ENCODE measurements at regions of chr4 and their contacts with region 1.

Region 1: GRCh38 chr4:73653695-73654106 is 33.5 kb upstream of the RASSF6 start:
- DNase-seq: no peak
- ATAC-seq: peak; percentile 73
- H3K4me3 ChIP-seq: no peak overlapping the region
- H3K27ac ChIP-seq: no peak overlapping the region
- H3K4me1 ChIP-seq: peaks cover 0 to 7% of the 10 kb centered on the region in 2 donors
- H3K27me3 ChIP-seq: no peaks in the 10 kb centered on the region

Region 2: GRCh38 chr4:73311428-73311827 is 342.3 kb before region 1 on chr4:
- intact Hi-C with region 1: loop called in 1 of 2 experiments (anchors 10 kb)
- DNase-seq: no peak
- ATAC-seq: no peak
- H3K4me3 ChIP-seq: no peak overlapping the region
- H3K27ac ChIP-seq: no peak overlapping the region
- H3K4me1 ChIP-seq: no peaks in the 10 kb centered on the region
- H3K27me3 ChIP-seq: no peaks in the 10 kb centered on the region

Region 3: DNA sequence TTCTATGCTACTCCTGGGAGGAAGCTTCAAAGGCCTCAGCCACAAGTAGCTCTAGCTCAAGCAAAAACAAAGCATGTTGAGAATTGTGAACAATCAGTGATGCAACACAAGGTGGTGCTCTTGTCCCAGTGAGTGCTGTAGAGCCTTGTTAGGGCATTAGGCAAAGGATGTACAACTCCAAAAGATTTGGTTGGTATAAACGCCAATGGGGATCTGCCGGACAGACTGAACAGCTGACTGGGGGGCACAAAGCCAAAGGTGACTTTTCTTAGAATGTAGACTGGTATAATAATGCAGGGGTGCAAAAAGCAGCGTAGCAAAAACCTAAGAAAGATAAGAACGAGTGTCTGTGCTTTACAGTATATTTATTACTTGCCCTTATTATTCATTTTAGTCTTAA is 312.2 kb before region 1 on chr4:
- intact Hi-C with region 1: loop called (anchors 5 to 10 kb)
- DNase-seq: no peak
- ATAC-seq: peak; percentile 44
- H3K4me3 ChIP-seq: no peak overlapping the region
- H3K27ac ChIP-seq: no peak overlapping the region
- H3K4me1 ChIP-seq: no peaks in the 10 kb centered on the region
- H3K27me3 ChIP-seq: no peaks in the 10 kb centered on the region

Region 4: DNA sequence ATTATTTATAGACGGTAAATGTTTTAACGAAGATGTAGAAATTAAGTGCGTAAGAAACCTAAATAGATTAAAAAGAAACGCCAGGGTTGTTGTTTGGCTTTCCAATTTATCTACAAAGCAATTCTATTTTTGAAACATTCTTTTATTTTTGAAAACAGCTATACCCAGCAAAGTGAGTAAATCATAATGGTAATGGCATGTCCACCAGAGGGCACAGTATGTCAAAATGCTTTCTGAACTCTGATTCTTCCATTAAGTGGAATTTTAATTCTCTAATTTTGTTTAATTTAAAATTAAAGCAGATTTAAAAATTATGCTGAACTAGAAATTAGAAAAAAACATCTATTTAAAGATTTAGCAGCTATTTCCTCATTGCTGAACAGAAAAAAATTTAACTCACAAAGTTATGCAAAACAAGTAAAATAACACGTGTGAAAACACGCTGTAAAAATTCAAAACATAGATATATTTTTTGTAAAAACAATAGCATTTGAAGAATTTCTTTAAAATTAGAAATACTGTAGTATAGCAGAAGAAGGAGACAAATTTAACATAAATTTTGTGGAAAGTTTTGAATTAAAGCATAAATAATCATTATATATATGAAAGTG is 60.0 kb before region 1 on chr4:
- intact Hi-C with region 1: loop called in 1 of 2 experiments (anchors 10 kb)
- DNase-seq: no peak
- ATAC-seq: no peak
- H3K4me3 ChIP-seq: no peak overlapping the region
- H3K27ac ChIP-seq: no peak overlapping the region
- H3K4me1 ChIP-seq: no peaks in the 10 kb centered on the region
- H3K27me3 ChIP-seq: no peaks in the 10 kb centered on the region

Region 5: DNA sequence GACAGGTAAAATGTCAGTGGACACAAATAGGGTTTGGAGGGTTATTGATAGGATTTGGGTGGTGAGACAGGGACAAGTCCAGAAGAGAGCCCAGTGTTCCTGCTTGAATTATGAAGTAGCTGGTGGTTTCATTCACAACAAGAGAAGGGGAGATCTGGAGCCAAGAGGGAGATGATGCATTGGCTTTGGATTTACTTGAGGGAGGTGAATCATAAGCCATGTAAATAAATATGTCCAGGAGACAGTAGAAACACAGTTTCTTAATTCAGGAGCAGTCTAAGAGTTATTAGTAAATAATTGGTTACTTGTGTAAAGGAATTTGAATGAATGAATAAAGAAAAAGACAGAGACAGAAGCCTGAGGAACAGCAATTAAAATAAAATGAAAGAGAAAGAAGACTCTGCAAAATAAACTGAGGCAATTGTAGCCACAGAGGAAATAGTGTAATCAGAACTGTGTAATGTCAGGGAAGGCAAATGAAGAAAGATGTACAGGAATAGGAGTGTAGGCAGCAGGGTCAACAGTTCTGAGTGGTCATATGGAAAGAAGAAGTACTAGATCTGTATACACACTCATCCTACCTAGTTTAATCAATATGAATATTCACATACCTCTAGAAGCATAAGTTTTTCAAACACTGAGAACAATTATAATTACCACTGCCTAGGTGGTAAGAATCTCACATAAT is 36.5 kb after region 1 on chr4:
- intact Hi-C with region 1: no loop called
- DNase-seq: no peak
- ATAC-seq: no peak
- H3K4me3 ChIP-seq: no peak overlapping the region
- H3K27ac ChIP-seq: no peak overlapping the region
- H3K4me1 ChIP-seq: no peaks in the 10 kb centered on the region
- H3K27me3 ChIP-seq: no peaks in the 10 kb centered on the region

Measured in aorta (tissue), 5 donors.